ENCODE measurements at regions of chr1 and their contacts with region 1.

Region 1: DNA sequence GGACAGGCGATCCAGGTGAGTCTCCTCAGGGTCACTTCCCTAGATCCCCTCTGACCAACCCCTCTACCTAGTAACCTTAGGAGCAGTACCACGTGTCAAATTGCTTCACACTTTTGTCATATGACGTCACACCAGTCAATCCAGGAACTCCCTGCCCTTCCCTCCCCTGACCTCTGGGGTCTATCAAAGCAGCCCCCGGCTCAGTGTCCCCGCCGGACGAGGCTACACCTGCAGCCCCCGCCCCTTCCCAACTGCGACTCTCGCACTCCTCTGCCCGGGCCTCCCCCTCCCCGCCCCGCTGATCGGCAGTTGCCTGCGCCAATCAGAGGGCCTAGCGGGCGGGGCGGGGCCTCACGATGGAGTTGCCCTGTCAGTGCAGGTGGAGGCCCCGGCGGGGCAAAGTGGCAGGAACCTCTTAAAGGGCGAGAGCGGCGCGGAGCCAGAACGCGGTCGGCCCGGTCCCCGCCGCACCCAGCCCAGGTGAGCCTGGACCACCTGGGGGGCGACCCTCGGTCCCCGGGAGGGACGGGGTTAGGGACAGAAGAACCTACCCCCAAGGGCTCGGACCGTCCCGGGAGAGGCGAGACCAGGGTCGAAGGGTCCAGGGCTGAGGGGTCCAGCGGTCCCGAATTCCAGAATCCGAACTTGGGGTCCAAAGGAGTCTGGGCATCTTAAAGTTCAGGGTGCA is 27.5 kb upstream of the EPB41 start:
- DNase-seq: peak; percentile 62 to 94 (median 85)

Region 2: DNA sequence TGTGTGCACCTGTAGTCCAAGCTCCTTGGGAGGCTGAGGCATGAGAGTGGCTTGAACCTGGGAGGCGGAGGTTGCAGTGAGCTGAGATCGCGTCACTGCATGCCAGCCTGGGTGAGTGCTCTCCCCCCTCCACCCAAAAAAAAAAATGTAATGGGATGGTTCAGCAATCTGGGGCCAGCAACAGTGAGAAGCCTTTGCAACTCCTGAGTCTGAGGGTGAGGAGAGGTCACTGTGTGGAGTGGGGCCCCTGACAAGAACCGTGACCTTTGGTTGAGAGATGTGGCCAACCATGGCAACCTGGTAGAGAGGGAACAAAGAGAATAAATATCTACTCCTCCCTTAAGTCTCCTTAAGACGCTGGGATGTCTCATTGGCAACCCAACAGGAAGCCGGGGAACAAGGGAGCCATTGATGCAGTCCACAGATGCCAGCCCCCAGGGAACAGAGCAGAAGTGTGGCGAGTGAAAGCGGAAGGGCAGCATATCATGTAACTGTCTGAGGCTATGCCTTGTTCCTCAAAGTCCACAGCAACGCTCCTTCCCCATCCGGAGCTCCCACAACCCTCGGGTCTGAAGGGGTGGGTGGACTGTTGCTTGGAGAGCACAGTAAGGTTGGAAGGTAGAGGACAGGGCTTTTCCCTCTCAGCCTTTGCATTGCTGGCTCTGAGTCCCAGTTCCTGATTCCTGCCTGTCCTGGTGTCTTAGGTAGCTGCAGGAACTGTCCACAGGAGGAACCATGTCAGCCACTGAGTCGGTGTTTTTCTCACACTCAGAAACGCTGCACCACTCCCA is 1885.1 kb before region 1 on chr1:
- intact Hi-C with region 1: no loop called
- DNase-seq: peak in 40 of 42 donors; percentile 30 to 75 (median 54)

Region 3: GRCh38 chr1:28505406-28506187 is 381.3 kb before region 1 on chr1 and contains the start of gene RCC1:
- intact Hi-C with region 1: no loop called
- DNase-seq: peak; percentile 88 to 97 (median 94)

Region 4: DNA sequence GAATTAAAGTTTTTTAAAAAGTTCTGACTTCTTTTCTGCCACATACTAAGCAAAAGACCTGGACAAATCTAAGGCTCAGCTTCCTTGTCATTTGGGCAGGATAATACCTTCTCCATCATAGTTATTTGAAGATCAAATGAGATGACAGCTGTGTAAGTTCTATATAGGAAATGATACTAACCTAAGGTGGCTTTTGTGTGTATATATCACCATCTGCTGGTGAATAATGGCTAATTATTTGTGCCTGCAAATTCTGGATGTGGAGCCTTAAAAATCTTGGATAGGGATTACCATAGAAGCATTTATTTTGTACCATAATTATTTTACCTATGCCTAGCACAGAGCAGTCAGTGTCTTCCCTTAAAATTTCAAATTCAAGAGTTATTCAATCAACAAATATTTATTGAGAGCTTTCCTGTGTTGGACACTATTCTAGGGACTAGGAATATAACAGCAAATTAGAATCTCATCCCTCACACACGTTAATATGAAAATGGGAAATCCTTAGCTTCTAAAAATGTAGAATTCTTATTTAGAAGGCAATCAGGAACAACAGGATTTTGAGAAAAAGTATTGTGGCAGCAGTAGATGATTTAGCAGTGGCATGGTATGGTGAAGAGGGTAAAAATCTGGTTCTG is 147.1 kb after region 1 on chr1:
- intact Hi-C with region 1: loop called (anchors 5 kb)
- DNase-seq: peak in 1 of 42 donors; percentile 41

Region 5: GRCh38 chr1:29124366-29125236 is 237.7 kb after region 1 on chr1:
- intact Hi-C with region 1: loop called (anchors 5 kb)
- DNase-seq: peak in 17 of 42 donors; percentile 28 to 62 (median 42)

Region 6: GRCh38 chr1:29202584-29203340 is 315.9 kb after region 1 on chr1:
- intact Hi-C with region 1: loop called (anchors 2 kb)
- DNase-seq: peak; percentile 76 to 99 (median 94)

Measured in head of caudate nucleus (tissue), 42 donors.